ENCODE measurements at regions of chr2 and their contacts with region 1.

Region 1: DNA sequence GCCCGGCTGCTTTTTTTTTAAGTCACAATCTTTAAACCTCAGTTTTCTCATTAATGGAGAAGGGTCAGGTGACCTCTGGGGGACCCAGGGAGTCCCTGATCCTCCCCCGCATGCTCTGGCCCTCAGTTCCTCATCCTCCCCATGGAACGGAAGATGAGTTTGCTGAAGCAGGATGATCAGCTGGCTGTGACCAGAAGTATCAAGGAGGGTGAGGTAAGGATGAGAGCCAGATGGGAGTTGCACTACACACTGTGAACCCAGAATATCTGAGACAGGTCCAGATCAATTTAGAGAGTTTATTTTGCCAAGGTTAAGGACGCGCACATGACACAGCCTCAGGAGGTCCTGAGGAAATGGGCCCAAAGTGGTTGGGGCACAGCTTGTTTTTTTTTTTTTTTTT is 3.8 kb downstream of the CATIP start:
- DNase-seq: no peak
- ATAC-seq: no peak
- H3K4me3 Mint-ChIP-seq: no peak overlapping the region
- H3K27ac Mint-ChIP-seq: no peak overlapping the region
- H3K4me1 Mint-ChIP-seq: peaks cover 6% of the 10 kb centered on the region
- H3K27me3 Mint-ChIP-seq: no peaks in the 10 kb centered on the region

Region 2: GRCh38 chr2:218286570-218287459 is 73.6 kb before region 1 on chr2:
- CTCF ChIA-PET with region 1: interaction called, 19 read pairs
- DNase-seq: peak; percentile 91
- ATAC-seq: peak; percentile 76
- H3K4me3 Mint-ChIP-seq: peak overlapping the region; percentile 86
- H3K27ac Mint-ChIP-seq: peak overlapping the region; percentile 98
- H3K4me1 Mint-ChIP-seq: peaks cover 77% of the 10 kb centered on the region
- H3K27me3 Mint-ChIP-seq: no peaks in the 10 kb centered on the region

Region 3: GRCh38 chr2:218301176-218301819 is 59.1 kb before region 1 on chr2:
- CTCF ChIA-PET with region 1: interaction called, 22 read pairs
- DNase-seq: peak; percentile 94
- ATAC-seq: peak; percentile 96
- H3K4me3 Mint-ChIP-seq: no peak overlapping the region
- H3K27ac Mint-ChIP-seq: peak overlapping the region; percentile 76
- H3K4me1 Mint-ChIP-seq: peaks cover 8% of the 10 kb centered on the region
- H3K27me3 Mint-ChIP-seq: no peaks in the 10 kb centered on the region

Region 4: GRCh38 chr2:218482651-218483050 is 122.2 kb after region 1 on chr2:
- CTCF ChIA-PET with region 1: no interaction called
- DNase-seq: no peak
- ATAC-seq: no peak
- H3K4me3 Mint-ChIP-seq: no peak overlapping the region
- H3K27ac Mint-ChIP-seq: no peak overlapping the region
- H3K4me1 Mint-ChIP-seq: peaks cover 15% of the 10 kb centered on the region
- H3K27me3 Mint-ChIP-seq: no peaks in the 10 kb centered on the region